ENCODE measurements at regions of chr1 and their contacts with region 1.

Region 1: DNA sequence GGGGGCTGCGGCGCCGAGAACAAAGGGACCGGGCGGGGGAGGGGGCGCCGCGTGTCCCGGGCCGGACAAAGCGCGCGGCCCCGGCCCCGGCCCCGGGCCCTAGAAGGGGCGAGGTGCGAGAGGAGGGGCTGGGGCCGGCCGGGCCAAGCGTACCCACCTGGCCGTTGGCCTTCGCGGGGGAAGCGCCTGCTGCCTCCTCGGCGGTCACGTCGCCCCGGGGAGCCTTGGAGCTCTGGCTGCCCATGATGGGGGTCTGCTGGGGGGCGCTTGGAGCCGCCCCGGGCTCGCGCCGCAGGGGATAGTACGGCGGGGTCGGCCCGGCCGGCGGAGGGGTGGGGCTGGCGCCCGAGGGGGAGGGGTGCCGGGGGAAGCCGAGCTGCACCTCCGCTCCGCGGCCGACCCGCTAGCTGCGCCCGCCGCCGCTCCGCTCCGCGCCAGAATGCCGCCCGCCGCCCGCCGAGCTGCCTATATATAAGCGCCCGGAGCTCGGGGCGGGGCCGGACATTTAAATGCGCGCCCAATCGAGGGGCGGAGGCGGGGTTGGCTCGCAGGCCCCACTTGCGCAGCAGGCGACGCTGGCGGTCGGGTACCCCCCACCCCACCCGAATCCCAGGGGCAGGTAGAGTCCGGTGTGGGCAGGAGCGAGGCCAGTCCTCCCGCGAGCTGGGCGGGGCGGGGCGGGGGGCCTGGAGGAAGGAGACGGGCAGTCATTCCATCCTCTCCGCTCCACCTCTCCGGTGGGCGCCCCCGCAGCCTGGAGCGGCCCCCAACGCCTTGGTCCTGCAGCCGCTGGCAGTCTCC is at the start of gene MARCKSL1:
- DNase-seq: peak; percentile 90 to 96 (median 95)
- ATAC-seq: peak; percentile 67 to 71
- H3K4me3 ChIP-seq: peak within 1 kb of the TSS; percentile 93
- H3K27ac ChIP-seq: peak within 1 kb of the TSS; percentile 68
- H3K4me1 ChIP-seq: peaks cover 6% of the 10 kb centered on the region
- H3K27me3 ChIP-seq: no peaks in the 10 kb centered on the region
- total RNA-seq, gene MARCKSL1: 14.5 to 52.7 (median 40.2) TPM

Region 2: GRCh38 chr1:32215629-32216480 is 120.1 kb before region 1 on chr1:
- intact Hi-C with region 1: loop called in 1 of 4 experiments (anchors 10 kb)
- DNase-seq: peak; percentile 60 to 74 (median 73)
- ATAC-seq: peak; percentile 59 to 75
- H3K4me3 ChIP-seq: no peak overlapping the region
- H3K27ac ChIP-seq: no peak overlapping the region
- H3K4me1 ChIP-seq: no peaks in the 10 kb centered on the region
- H3K27me3 ChIP-seq: no peaks in the 10 kb centered on the region